ENCODE measurements at regions of chr14 and their contacts with region 1.

Region 1: GRCh38 chr14:63993992-63994391 is 141.2 kb downstream of the SYNE2 start:
- DNase-seq: peak in 6 of 9 donors; percentile 17 to 36 (median 18)
- ATAC-seq: no peak
- H3K4me3 ChIP-seq: no peak overlapping the region
- H3K4me3 Mint-ChIP-seq: no peak overlapping the region
- H3K27ac ChIP-seq: no peak overlapping the region
- H3K27ac Mint-ChIP-seq: no peak overlapping the region
- H3K4me1 ChIP-seq: no peaks in the 10 kb centered on the region
- H3K4me1 Mint-ChIP-seq: peaks cover 0 to 12% (median 0%) of the 10 kb centered on the region in 7 donors
- H3K27me3 ChIP-seq: no peaks in the 10 kb centered on the region
- H3K27me3 Mint-ChIP-seq: no peaks in the 10 kb centered on the region

Region 2: DNA sequence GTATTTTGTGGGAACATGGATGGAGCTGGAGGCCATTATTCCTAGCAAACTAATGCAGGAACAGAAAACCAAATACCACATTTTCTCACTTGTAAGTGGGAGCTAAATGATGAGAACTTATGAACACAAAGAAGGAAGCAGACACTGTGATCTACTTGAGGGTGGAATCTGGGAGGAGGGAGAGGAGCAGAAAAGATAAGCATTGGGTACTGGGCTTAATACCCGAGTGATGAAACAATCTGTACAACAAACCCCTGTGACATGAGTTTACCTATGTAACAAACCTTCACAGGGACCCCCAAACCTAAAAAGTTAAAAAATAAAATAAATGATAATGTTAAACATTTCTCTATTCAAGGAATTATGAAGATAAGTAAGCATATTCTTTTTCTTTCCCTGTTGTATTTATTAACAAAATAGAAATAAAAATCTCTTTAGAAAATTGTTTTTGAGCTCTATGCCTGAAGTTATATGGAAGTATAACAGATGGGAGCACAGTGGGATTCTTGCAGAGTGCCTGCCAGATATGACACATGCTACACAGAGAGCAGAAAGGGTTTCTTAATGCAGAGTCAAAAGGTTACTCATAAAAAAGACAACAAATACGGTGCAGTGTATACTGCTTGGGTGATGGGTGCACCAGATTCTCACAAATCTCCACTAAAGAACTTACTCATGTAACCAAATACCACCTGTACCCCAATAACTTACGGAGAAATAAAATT is 193.2 kb before region 1 on chr14:
- CTCF ChIA-PET with region 1: interaction called, 10 read pairs
- POLR2A ChIA-PET with region 1: no interaction called
- intact Hi-C with region 1: loop called in 1 of 2 experiments (anchors 1 kb)
- DNase-seq: no peak
- ATAC-seq: no peak
- H3K4me3 ChIP-seq: no peak overlapping the region
- H3K4me3 Mint-ChIP-seq: no peak overlapping the region
- H3K27ac ChIP-seq: no peak overlapping the region
- H3K27ac Mint-ChIP-seq: peak overlapping the region in 1 of 9 donors; percentile 46
- H3K4me1 ChIP-seq: no peaks in the 10 kb centered on the region
- H3K4me1 Mint-ChIP-seq: peaks cover 3 to 12% (median 4%) of the 10 kb centered on the region in 7 donors
- H3K27me3 ChIP-seq: no peaks in the 10 kb centered on the region
- H3K27me3 Mint-ChIP-seq: peaks cover 0 to 17% (median 0%) of the 10 kb centered on the region in 5 donors

Region 3: GRCh38 chr14:63840981-63841380 is 153.0 kb before region 1 on chr14:
- CTCF ChIA-PET with region 1: no interaction called
- POLR2A ChIA-PET with region 1: interaction called, 3 read pairs
- intact Hi-C with region 1: loop called in 1 of 2 experiments (anchors 1 kb)
- DNase-seq: peak in 8 of 9 donors; percentile 20 to 57 (median 46)
- ATAC-seq: peak; percentile 80
- H3K4me3 ChIP-seq: no peak overlapping the region
- H3K4me3 Mint-ChIP-seq: no peak overlapping the region
- H3K27ac ChIP-seq: no peak overlapping the region
- H3K27ac Mint-ChIP-seq: peak overlapping the region in 1 of 9 donors; percentile 31
- H3K4me1 ChIP-seq: peaks cover 0 to 3% of the 10 kb centered on the region in 2 donors
- H3K4me1 Mint-ChIP-seq: peaks cover 0 to 5% (median 4%) of the 10 kb centered on the region in 7 donors
- H3K27me3 ChIP-seq: no peaks in the 10 kb centered on the region
- H3K27me3 Mint-ChIP-seq: peaks cover 0 to 4% (median 0%) of the 10 kb centered on the region in 5 donors

Region 4: GRCh38 chr14:64005822-64006221 is 11.8 kb after region 1 on chr14:
- CTCF ChIA-PET with region 1: no interaction called
- POLR2A ChIA-PET with region 1: no interaction called
- intact Hi-C with region 1: no loop called
- DNase-seq: no peak
- ATAC-seq: no peak
- H3K4me3 ChIP-seq: no peak overlapping the region
- H3K4me3 Mint-ChIP-seq: no peak overlapping the region
- H3K27ac ChIP-seq: no peak overlapping the region
- H3K27ac Mint-ChIP-seq: peak overlapping the region in 1 of 9 donors; percentile 44
- H3K4me1 ChIP-seq: no peaks in the 10 kb centered on the region
- H3K4me1 Mint-ChIP-seq: peaks cover 0 to 7% (median 0%) of the 10 kb centered on the region in 7 donors
- H3K27me3 ChIP-seq: no peaks in the 10 kb centered on the region
- H3K27me3 Mint-ChIP-seq: no peaks in the 10 kb centered on the region